ENCODE measurements at regions of chr4 and their contacts with region 1.

Region 1: DNA sequence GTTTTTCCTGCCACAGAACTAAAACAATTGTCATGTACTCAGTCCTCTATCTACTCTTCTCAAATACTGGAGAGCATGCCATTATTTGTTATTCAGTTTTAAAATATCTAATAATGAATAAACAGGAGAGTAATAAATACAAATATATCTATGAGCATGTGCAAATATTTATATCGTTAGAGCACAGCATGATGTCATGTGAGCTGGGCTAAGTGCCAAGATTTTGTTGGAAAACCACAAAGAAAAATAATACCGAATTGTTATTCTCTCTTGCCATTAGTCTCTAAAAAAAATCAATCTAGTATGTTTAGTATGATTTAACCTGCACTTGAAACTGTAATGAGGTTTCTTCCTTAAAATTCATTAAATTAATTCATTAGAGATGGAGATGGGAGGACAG is 97.3 kb downstream of the DDX60 start:
- DNase-seq: peak; percentile 85
- ATAC-seq: no peak; the same call in none of the 2 replicates
- H3K4me3 ChIP-seq: no peak overlapping the region
- H3K27ac ChIP-seq: no peak overlapping the region
- H3K4me1 ChIP-seq: peaks cover 1% of the 10 kb centered on the region; the same call in 1 of the 2 replicates
- H3K27me3 ChIP-seq: no peaks in the 10 kb centered on the region
- CTCF ChIP-seq: no peak
- POLR2A ChIP-seq: no peak
- RAD21 ChIP-seq: no peak

Region 2: DNA sequence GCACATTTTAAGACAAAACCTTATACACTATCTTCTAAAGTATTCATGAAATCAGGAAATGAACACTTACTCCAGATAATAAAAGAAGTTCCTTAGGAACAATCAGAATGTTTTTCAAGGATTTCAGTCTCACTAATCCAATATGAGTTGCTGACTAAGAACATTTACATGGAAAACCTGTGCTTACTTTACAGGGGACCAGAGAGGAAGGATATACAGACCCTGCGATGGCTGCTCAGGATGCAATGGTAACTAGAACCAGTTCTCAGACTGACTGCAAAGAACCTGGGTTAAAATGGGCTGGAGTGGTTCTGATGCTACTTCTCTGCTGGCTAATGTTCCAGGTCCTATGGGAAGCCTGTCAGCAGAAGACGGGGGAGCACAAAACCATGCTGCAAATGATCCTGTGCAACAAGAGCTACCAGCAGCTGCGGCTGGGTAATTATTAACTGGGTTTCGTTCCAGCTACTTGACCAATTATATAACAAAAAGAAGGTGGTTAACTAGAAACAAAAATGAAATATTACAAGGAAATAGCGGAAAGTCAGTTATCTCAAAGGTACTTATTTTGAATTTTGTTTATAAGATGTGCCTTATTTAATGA is 43.7 kb before region 1 on chr4:
- CTCF ChIA-PET with region 1: no interaction called
- POLR2A ChIA-PET with region 1: no interaction called
- dilution Hi-C with region 1: no loop called
- in situ Hi-C with region 1: no loop called
- intact Hi-C with region 1: no loop called
- DNase-seq: no peak
- ATAC-seq: no peak
- H3K4me3 ChIP-seq: no peak overlapping the region
- H3K27ac ChIP-seq: no peak overlapping the region
- H3K4me1 ChIP-seq: no peaks in the 10 kb centered on the region
- H3K27me3 ChIP-seq: peaks cover 2% of the 10 kb centered on the region; the same call in 1 of the 2 replicates
- CTCF ChIP-seq: no peak
- POLR2A ChIP-seq: no peak
- RAD21 ChIP-seq: no peak

Region 3: GRCh38 chr4:168199260-168199957 is 21.9 kb before region 1 on chr4:
- CTCF ChIA-PET with region 1: no interaction called
- POLR2A ChIA-PET with region 1: no interaction called
- dilution Hi-C with region 1: no loop called
- in situ Hi-C with region 1: no loop called
- intact Hi-C with region 1: loop called (anchors 2 kb)
- DNase-seq: no peak
- ATAC-seq: no peak
- H3K4me3 ChIP-seq: no peak overlapping the region
- H3K27ac ChIP-seq: no peak overlapping the region
- H3K4me1 ChIP-seq: no peaks in the 10 kb centered on the region; the same call in 1 of the 2 replicates
- H3K27me3 ChIP-seq: no peaks in the 10 kb centered on the region
- CTCF ChIP-seq: no peak
- POLR2A ChIP-seq: no peak
- RAD21 ChIP-seq: no peak